ENCODE measurements at regions of chr7 and their contacts with region 1.

Region 1: DNA sequence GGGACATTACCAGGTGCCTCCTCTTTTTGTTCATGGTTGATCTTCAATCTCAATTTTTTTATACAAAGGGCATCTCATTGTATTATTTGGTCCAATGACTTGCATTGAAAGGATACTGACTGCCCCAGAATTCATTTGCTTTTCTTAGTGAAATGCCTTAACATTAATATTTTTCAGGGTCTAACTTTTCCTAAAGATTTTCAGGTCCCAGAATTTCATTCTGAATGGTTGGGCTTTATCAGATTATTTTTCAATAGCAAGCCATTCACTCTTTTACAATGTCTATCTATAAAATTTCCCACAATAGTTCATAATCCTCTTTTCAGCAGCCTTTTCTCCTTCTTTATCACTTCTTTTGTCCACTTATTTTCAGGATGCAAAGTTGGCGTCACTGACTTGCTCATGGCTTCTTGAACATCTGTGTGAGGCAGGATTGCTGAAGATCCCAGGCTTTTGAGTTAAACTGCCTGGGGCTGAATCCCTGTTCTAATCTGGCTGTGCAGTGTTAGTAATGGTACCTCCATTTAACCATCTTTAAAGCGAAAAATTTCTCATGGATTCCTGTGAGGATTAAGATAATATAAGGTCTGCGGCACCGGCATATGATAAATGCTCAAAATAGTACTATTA is 131.7 kb upstream of the HDAC9 start:
- DNase-seq: no peak
- H3K4me3 ChIP-seq: no peak overlapping the region
- H3K4me3 Mint-ChIP-seq: no peak overlapping the region
- H3K27ac ChIP-seq: no peak overlapping the region
- H3K27ac Mint-ChIP-seq: no peak overlapping the region
- H3K4me1 ChIP-seq: no peaks in the 10 kb centered on the region
- H3K4me1 Mint-ChIP-seq: no peaks in the 10 kb centered on the region
- H3K27me3 ChIP-seq: no peaks in the 10 kb centered on the region
- H3K27me3 Mint-ChIP-seq: no peaks in the 10 kb centered on the region

Region 2: GRCh38 chr7:18352339-18353255 is 11.3 kb before region 1 on chr7:
- CTCF ChIA-PET with region 1: interaction called, 17 read pairs
- POLR2A ChIA-PET with region 1: no interaction called
- intact Hi-C with region 1: no loop called
- DNase-seq: no peak
- H3K4me3 ChIP-seq: no peak overlapping the region
- H3K4me3 Mint-ChIP-seq: no peak overlapping the region
- H3K27ac ChIP-seq: no peak overlapping the region
- H3K27ac Mint-ChIP-seq: no peak overlapping the region
- H3K4me1 ChIP-seq: peaks cover 5% of the 10 kb centered on the region
- H3K4me1 Mint-ChIP-seq: peaks cover 1 to 6% (median 3%) of the 10 kb centered on the region in 4 donors
- H3K27me3 ChIP-seq: no peaks in the 10 kb centered on the region
- H3K27me3 Mint-ChIP-seq: peaks cover 0 to 3% of the 10 kb centered on the region in 2 donors

Measured in CD4-positive, alpha-beta memory T cell (primary cell).